WTC11 (cell line): ENCODE measurements at regions of chr5 and their contacts with region 1.

Region 1: DNA sequence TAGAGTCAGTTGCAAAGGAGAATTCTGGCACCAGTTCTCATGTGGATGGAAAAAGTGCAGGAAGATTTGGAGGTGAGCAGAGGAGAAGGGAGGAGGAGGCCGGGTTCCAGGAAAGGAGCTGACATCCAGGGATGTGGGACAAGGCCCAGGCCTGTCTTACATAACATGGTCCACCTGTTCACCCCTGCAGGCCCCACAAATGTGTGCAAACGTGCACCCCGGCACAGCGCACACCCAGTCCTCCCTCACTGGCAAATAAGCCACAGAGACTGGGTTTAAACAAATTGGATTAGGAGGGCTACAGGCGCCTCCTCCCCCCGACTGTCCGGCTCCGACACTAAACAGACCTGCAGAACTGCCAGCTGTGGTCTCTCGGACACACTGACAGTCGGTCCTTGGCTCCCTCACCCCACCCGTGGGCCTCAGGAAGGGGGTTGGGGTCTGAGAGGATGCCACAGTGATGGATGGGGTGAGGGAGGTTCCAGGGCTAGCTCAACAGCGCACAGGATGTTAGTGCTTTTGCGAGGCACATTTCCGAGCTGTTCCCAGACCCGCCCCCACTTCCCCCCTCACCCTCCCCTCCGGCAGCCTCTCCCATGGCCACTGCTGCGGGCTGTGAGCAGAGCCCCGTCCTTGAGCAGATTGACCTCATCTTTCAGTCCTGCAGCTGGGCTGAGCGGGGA is 43.4 kb upstream of the IL17B start:
- DNase-seq: peak; percentile 49
- ATAC-seq: peak; percentile 43
- H3K4me3 Mint-ChIP-seq: no peak overlapping the region
- H3K27ac Mint-ChIP-seq: no peak overlapping the region
- H3K4me1 Mint-ChIP-seq: peaks cover 46% of the 10 kb centered on the region
- H3K27me3 Mint-ChIP-seq: no peaks in the 10 kb centered on the region
- CTCF ChIP-seq: no peak

Region 2: DNA sequence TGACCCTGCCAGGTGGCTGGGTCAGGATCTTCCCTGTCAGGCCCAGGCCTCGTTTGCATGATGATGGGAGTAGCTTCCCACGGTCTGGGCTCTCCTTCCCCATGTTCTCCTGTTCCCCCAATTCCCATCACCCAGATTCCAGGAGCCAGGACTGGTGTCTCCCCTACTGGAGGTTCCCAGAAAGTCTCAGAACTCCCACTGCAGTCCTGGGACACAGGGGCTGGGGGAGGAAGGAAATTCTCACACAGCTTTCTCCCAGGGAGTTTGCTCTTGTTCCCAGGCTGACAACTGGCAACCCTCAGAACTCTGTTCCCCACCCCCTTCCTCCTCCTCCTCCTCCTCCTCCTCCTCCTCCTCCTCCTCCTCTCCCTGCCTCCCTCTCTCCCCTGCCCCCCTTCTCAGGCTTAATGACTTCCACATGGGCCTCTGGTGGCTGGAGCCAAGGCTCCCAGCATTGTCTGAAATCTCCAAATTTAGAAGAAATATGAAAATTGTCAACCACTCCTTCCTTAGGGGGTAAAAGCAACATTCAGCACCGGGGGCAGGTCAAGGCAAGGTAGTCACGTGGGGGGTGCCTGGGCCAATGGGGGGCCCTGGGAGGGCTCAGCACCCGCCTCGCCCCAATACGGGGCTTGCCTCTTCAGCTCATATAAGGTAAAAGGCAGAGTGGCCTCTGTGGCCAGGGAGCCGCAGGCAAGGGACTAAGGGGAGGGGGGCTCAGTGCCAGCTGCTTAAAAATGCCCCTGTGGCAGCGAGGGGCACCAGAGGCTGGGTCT is 16.1 kb before region 1 on chr5:
- CTCF ChIA-PET with region 1: interaction called, 11 read pairs
- POLR2A ChIA-PET with region 1: interaction called, 3 read pairs
- DNase-seq: peak; percentile 41
- ATAC-seq: peak; percentile 62
- H3K4me3 Mint-ChIP-seq: no peak overlapping the region
- H3K27ac Mint-ChIP-seq: 0 out of 2 replicates have a peak overlapping the region, but pooled peaks have one; percentile 60
- H3K4me1 Mint-ChIP-seq: peaks cover 43% of the 10 kb centered on the region
- H3K27me3 Mint-ChIP-seq: no peaks in the 10 kb centered on the region; the same call in 1 of the 2 replicates
- CTCF ChIP-seq: no peak